HepG2 (cell line): ENCODE measurements at regions of chr1 and their contacts with region 1.

Region 1: DNA sequence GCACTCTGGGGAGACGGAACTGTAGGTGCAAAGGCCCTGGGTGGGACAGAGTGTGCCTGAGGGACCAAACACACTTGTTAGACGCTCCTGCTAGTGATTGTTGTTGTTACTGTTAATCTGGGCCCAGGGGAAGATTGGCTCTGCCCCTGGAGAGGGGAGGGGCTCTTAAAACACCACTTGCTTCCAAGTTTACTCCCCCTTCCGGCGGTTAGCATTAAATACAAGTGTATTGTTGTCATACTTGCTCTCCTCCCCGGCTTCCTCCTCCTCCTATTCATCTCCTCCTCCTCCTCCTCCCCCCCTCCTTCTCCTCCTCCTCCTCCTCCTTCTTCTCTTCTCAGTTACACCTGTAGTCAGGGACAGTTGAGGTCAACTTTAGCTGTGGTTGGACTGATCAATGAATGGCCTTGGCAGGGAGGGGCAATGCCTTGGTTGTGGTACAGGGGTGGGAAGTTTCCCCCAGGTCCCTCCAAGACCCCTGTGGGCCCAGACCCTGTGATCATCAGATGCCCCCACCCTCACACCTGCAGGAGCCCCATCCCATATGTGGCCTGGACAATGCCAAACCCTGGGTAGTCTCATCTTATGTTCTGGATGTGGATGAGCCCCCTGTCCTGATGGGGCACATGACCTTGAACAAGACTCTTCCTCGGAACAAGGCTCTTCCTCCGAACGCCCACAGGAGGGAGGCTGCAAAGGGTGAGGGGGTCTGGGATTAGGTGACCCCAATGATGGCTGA is 217.3 kb downstream of the PTPRU start:
- DNase-seq: peak; percentile 70
- ATAC-seq: peak; percentile 70
- H3K4me3 ChIP-seq: peak overlapping the region in 1 of 3 experiments; percentile 41; a peak in 1 of 6 replicates
- H3K27ac ChIP-seq: no peak overlapping the region
- H3K4me1 ChIP-seq: peaks cover 30% of the 10 kb centered on the region
- H3K27me3 ChIP-seq: no peaks in the 10 kb centered on the region; a peak in 1 of 5 replicates
- CTCF ChIP-seq: peak; percentile 57
- EP300 ChIP-seq: no peak
- POLR2A ChIP-seq: no peak
- RAD21 ChIP-seq: no peak

Region 2: DNA sequence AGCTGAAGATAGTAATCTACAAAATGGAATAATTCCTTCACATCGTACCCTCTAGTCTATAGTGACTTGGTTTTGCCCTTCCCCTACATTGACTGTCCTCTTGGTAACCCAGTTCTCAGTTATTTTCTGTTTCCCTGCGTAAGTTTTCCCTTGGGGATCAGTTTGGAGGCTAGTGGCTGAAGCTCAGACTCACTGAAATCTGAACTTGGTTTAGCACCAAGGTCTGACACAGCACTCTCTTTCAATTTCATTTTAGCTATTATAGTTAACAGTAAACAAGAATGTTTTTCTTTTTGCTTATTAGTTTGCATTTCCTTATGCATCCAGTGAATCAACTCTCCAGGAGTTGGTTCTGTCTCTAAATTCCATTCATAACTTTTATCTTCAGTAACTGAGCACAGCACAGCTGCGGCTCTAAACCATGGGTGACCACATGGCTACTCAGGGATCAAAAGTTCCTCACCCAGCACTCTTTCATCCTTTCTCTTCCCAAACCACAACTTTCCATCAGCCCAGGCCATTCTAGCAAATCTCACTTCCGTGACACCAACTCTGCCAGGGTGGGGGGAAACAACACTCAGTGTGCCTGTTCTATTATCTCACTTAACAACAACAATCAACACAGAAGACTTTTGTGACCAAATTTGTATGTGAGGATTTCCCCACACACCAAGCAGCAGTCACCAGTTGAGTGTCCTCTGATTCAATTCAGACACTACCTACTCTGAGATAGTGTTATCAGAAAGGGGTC is 1764.1 kb before region 1 on chr1:
- CTCF ChIA-PET with region 1: no interaction called
- POLR2A ChIA-PET with region 1: no interaction called
- in situ Hi-C with region 1: no loop called
- intact Hi-C with region 1: no loop called
- DNase-seq: no peak
- ATAC-seq: no peak
- H3K4me3 ChIP-seq: no peak overlapping the region
- H3K27ac ChIP-seq: no peak overlapping the region
- H3K4me1 ChIP-seq: peaks cover 25% of the 10 kb centered on the region
- H3K27me3 ChIP-seq: peaks cover 4 to 36% of the 10 kb centered on the region in 2 experiments; a peak in 4 of 5 replicates
- CTCF ChIP-seq: no peak
- EP300 ChIP-seq: no peak
- POLR2A ChIP-seq: no peak
- RAD21 ChIP-seq: no peak

Region 3: GRCh38 chr1:29415156-29415830 is 38.4 kb before region 1 on chr1:
- CTCF ChIA-PET with region 1: no interaction called
- POLR2A ChIA-PET with region 1: no interaction called
- in situ Hi-C with region 1: no loop called
- intact Hi-C with region 1: loop called (anchors 1 kb)
- DNase-seq: peak; percentile 49
- ATAC-seq: peak; percentile 86
- H3K4me3 ChIP-seq: no peak overlapping the region
- H3K27ac ChIP-seq: no peak overlapping the region
- H3K4me1 ChIP-seq: no peaks in the 10 kb centered on the region
- H3K27me3 ChIP-seq: no peaks in the 10 kb centered on the region; a peak in 1 of 5 replicates
- CTCF ChIP-seq: peak; percentile 59
- EP300 ChIP-seq: no peak
- POLR2A ChIP-seq: no peak
- RAD21 ChIP-seq: 0 out of 2 replicates have a peak, but pooled peaks have one; percentile 12

Region 4: DNA sequence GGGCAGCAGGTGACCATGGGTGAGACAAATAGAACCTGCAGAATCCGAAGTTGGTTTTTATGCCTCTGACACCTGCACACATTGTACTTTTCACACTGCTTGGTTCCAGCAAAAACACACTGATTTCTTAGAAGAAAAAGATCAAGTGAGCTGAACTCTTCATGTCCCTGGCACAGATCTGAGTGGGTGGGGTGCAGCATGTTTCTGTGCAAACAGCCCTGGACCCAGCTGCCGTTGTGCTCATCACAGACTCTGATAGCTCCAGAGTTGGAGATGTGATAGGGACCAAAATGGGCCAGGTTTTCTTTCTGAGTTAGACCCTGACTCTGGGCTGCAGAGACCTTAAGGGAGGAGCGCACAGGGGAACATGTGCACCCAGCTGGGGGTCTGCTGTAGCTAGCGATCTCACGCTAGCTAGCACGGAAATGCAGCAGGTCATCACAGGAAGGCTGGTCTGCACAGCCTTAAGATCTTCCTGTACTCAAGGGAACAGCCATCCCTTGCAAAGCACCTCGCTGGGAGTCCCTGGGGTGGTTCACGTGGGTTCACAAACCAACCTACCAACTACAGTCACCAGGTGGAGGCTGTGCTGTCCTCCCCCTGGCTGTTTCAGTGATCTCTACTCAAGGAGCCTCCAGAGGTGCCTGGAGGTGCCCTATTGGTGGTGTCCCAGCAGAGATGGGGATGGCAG is 73.8 kb after region 1 on chr1:
- CTCF ChIA-PET with region 1: no interaction called
- POLR2A ChIA-PET with region 1: no interaction called
- in situ Hi-C with region 1: no loop called
- intact Hi-C with region 1: no loop called
- DNase-seq: no peak
- ATAC-seq: no peak
- H3K4me3 ChIP-seq: no peak overlapping the region
- H3K27ac ChIP-seq: no peak overlapping the region
- H3K4me1 ChIP-seq: no peaks in the 10 kb centered on the region
- H3K27me3 ChIP-seq: peaks cover 3 to 25% of the 10 kb centered on the region in 2 experiments; a peak in 3 of 5 replicates
- CTCF ChIP-seq: no peak
- EP300 ChIP-seq: no peak
- POLR2A ChIP-seq: no peak
- RAD21 ChIP-seq: no peak

Region 5: DNA sequence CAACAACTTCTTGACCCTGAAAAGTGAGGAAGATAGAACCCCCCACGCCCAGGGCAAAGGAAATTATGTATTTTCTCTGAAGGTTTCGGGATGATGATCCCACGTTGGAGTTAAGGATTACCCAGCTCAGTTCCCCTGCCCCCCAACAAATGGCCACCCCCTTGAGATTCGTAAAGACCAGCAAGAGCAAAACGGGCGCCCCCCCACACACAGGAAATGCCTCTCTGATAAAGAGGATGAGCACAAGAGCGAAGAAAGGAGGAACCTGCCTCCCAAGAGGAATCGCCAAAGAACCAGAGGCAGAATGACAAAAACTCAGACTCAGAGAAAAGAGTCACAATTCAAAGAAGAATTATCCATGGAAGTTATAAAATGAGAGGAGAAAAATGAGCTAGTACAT is 692.8 kb after region 1 on chr1:
- CTCF ChIA-PET with region 1: no interaction called
- POLR2A ChIA-PET with region 1: no interaction called
- in situ Hi-C with region 1: no loop called
- intact Hi-C with region 1: no loop called
- DNase-seq: no peak
- ATAC-seq: no peak
- H3K4me3 ChIP-seq: no peak overlapping the region
- H3K27ac ChIP-seq: no peak overlapping the region
- H3K4me1 ChIP-seq: no peaks in the 10 kb centered on the region
- H3K27me3 ChIP-seq: no peaks in the 10 kb centered on the region
- CTCF ChIP-seq: no peak
- EP300 ChIP-seq: no peak
- POLR2A ChIP-seq: no peak
- RAD21 ChIP-seq: no peak